CD4-positive, alpha-beta memory T cell (primary cell): ENCODE measurements at regions of chr7 and their contacts with region 1.

Region 1: DNA sequence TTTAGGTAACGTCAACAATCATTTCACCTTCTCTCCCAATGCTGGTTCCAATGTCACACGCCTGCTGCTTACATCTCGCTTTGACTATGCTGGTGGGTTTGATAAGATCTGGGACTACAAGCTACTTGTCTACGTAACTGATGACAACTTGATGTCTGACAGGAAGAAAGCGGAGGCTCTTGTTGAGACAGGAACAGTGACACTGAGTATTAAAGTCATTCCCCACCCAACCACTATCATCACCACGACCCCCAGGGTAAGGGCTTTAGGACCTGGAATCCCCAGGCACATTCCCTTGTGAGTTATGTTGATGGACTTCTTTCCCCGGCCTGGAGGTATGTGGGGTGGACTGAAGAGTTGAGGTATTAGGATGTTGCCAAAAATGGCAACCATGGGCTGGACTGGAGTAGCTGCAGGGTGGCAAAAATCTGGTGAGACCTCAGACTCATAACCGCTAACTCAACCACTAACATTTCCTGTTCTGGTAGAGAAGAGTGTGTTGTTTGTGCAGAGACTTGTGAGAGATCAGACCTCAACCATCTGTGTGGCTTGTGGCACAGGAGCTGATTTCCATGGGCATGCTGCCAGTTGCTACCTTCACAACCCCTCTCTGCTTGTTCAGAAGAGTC is 59.2 kb downstream of the CDHR3 start:
- DNase-seq: peak; percentile 89 to 92 (median 91)
- H3K4me3 ChIP-seq: peak overlapping the region in 1 of 2 donors; percentile 48
- H3K4me3 Mint-ChIP-seq: peak overlapping the region; percentile 5 to 82 (median 72)
- H3K27ac ChIP-seq: peak overlapping the region; percentile 48
- H3K27ac Mint-ChIP-seq: peak overlapping the region; percentile 88 to 99 (median 98)
- H3K4me1 ChIP-seq: peaks cover 52% of the 10 kb centered on the region
- H3K4me1 Mint-ChIP-seq: peaks cover 38 to 70% (median 48%) of the 10 kb centered on the region in 4 donors
- H3K27me3 ChIP-seq: no peaks in the 10 kb centered on the region
- H3K27me3 Mint-ChIP-seq: no peaks in the 10 kb centered on the region

Region 2: GRCh38 chr7:105678811-105679495 is 343.4 kb before region 1 on chr7:
- CTCF ChIA-PET with region 1: no interaction called
- POLR2A ChIA-PET with region 1: interaction called, 29 read pairs
- intact Hi-C with region 1: loop called (anchors 1 kb)
- DNase-seq: peak in 2 of 5 donors; percentile 17 to 27
- H3K4me3 ChIP-seq: peak overlapping the region; percentile 12 to 27
- H3K4me3 Mint-ChIP-seq: peak overlapping the region; percentile 86 to 95 (median 92)
- H3K27ac ChIP-seq: peak overlapping the region; percentile 83
- H3K27ac Mint-ChIP-seq: peak overlapping the region; percentile 90 to 99 (median 96)
- H3K4me1 ChIP-seq: peaks cover 63% of the 10 kb centered on the region
- H3K4me1 Mint-ChIP-seq: peaks cover 61 to 94% (median 74%) of the 10 kb centered on the region in 4 donors
- H3K27me3 ChIP-seq: no peaks in the 10 kb centered on the region
- H3K27me3 Mint-ChIP-seq: no peaks in the 10 kb centered on the region

Region 3: GRCh38 chr7:106009403-106010226 is 12.7 kb before region 1 on chr7:
- CTCF ChIA-PET with region 1: interaction called, 46 read pairs
- POLR2A ChIA-PET with region 1: interaction called, 28 read pairs
- intact Hi-C with region 1: loop called (anchors 1 kb)
- DNase-seq: peak; percentile 77 to 83 (median 78)
- H3K4me3 ChIP-seq: no peak overlapping the region
- H3K4me3 Mint-ChIP-seq: peak overlapping the region in 4 of 8 donors; percentile 34 to 64 (median 48)
- H3K27ac ChIP-seq: no peak overlapping the region
- H3K27ac Mint-ChIP-seq: peak overlapping the region in 6 of 7 donors; percentile 64 to 85 (median 74)
- H3K4me1 ChIP-seq: peaks cover 23% of the 10 kb centered on the region
- H3K4me1 Mint-ChIP-seq: peaks cover 18 to 28% (median 24%) of the 10 kb centered on the region in 4 donors
- H3K27me3 ChIP-seq: no peaks in the 10 kb centered on the region
- H3K27me3 Mint-ChIP-seq: no peaks in the 10 kb centered on the region

Region 4: DNA sequence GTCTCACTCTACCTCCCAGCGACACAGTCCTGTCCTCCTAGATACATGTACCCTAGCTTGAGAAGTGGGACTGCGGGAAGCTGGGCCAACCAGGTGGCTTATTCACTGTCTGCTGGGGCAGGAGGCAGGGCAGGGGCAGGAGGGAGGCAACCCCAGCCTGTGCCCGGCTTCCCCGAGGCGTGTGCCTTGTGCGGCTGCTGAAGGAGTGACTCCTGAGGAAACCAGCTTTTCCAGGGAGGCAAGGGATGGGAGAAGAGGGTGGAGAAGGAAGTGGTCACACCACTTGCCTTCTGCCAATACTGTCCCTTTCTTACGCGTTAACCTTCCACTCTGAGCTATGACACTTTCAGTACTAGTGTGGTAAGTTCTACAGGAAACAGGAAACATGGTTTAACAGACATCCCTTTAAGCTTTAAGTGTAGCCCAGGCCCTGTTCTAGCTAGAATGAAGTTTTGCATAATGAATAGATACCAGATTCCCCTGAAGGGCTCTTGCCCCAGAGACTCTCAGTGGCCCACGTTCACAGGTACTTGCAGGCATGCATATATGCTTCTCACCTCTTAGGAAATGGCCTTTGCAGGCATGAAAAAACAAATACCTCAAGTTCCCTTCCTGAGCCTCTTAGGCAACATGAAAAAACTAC is 49.2 kb after region 1 on chr7:
- CTCF ChIA-PET with region 1: interaction called, 5 read pairs
- POLR2A ChIA-PET with region 1: interaction called, 12 read pairs
- intact Hi-C with region 1: no loop called
- DNase-seq: peak; percentile 54 to 69 (median 63)
- H3K4me3 ChIP-seq: peak overlapping the region in 1 of 2 donors; percentile 49
- H3K4me3 Mint-ChIP-seq: peak overlapping the region; percentile 73 to 86 (median 82)
- H3K27ac ChIP-seq: peak overlapping the region; percentile 52
- H3K27ac Mint-ChIP-seq: peak overlapping the region; percentile 86 to 95 (median 94)
- H3K4me1 ChIP-seq: peaks cover 43% of the 10 kb centered on the region
- H3K4me1 Mint-ChIP-seq: peaks cover 28 to 62% (median 42%) of the 10 kb centered on the region in 4 donors
- H3K27me3 ChIP-seq: no peaks in the 10 kb centered on the region
- H3K27me3 Mint-ChIP-seq: no peaks in the 10 kb centered on the region